ENCODE measurements at regions of chr14 and their contacts with region 1.

Region 1: GRCh38 chr14:67526676-67527459 is 6.2 kb upstream of the PLEKHH1 start:
- DNase-seq: peak in 1 of 5 donors; percentile 29
- H3K4me3 ChIP-seq: no peak overlapping the region
- H3K27ac ChIP-seq: no peak overlapping the region
- H3K4me1 ChIP-seq: no peaks in the 10 kb centered on the region
- H3K27me3 ChIP-seq: no peaks in the 10 kb centered on the region
- CTCF ChIP-seq: peak in 1 of 3 donors; percentile 20
- EP300 ChIP-seq: no peak
- POLR2A ChIP-seq: no peak

Region 2: GRCh38 chr14:66634876-66635834 is 891.7 kb before region 1 on chr14:
- intact Hi-C with region 1: loop called in 1 of 4 experiments (anchors 5 kb)
- DNase-seq: no peak
- H3K4me3 ChIP-seq: no peak overlapping the region
- H3K27ac ChIP-seq: no peak overlapping the region
- H3K4me1 ChIP-seq: peaks cover 2% of the 10 kb centered on the region
- H3K27me3 ChIP-seq: no peaks in the 10 kb centered on the region
- CTCF ChIP-seq: no peak
- EP300 ChIP-seq: no peak
- POLR2A ChIP-seq: no peak

Region 3: GRCh38 chr14:67557126-67557525 is 30.3 kb after region 1 on chr14:
- intact Hi-C with region 1: no loop called
- DNase-seq: no peak
- H3K4me3 ChIP-seq: no peak overlapping the region
- H3K27ac ChIP-seq: no peak overlapping the region
- H3K4me1 ChIP-seq: no peaks in the 10 kb centered on the region
- H3K27me3 ChIP-seq: no peaks in the 10 kb centered on the region
- CTCF ChIP-seq: no peak
- EP300 ChIP-seq: no peak
- POLR2A ChIP-seq: no peak